Naive thymus-derived CD4-positive, alpha-beta T cell (primary cell): ENCODE measurements at regions of chr12 and their contacts with region 1.

Region 1: GRCh38 chr12:44847888-44848702 is 28.0 kb downstream of the NELL2 start:
- DNase-seq: peak; percentile 29 to 86 (median 79)
- ATAC-seq: peak; percentile 93
- H3K4me3 ChIP-seq: peak overlapping the region; percentile 30
- H3K4me3 Mint-ChIP-seq: peak overlapping the region; percentile 65 to 84 (median 78)
- H3K27ac ChIP-seq: peak overlapping the region; percentile 62
- H3K27ac Mint-ChIP-seq: peak overlapping the region; percentile 90 to 99 (median 97)
- H3K4me1 ChIP-seq: peaks cover 67 to 77% of the 10 kb centered on the region in 2 donors
- H3K4me1 Mint-ChIP-seq: peaks cover 27 to 95% (median 84%) of the 10 kb centered on the region in 7 donors
- H3K27me3 ChIP-seq: no peaks in the 10 kb centered on the region
- H3K27me3 Mint-ChIP-seq: no peaks in the 10 kb centered on the region

Region 2: GRCh38 chr12:44817687-44818086 is 30.4 kb before region 1 on chr12:
- CTCF ChIA-PET with region 1: interaction called, 3 read pairs
- POLR2A ChIA-PET with region 1: interaction called, 10 read pairs
- intact Hi-C with region 1: loop called (anchors 1 to 2 kb)
- DNase-seq: no peak
- ATAC-seq: no peak
- H3K4me3 ChIP-seq: no peak overlapping the region
- H3K4me3 Mint-ChIP-seq: peak overlapping the region in 3 of 10 donors; percentile 9 to 39 (median 28)
- H3K27ac ChIP-seq: no peak overlapping the region
- H3K27ac Mint-ChIP-seq: peak overlapping the region in 8 of 9 donors; percentile 5 to 91 (median 37)
- H3K4me1 ChIP-seq: peaks cover 17 to 24% of the 10 kb centered on the region in 2 donors
- H3K4me1 Mint-ChIP-seq: peaks cover 13 to 84% (median 64%) of the 10 kb centered on the region in 7 donors
- H3K27me3 ChIP-seq: no peaks in the 10 kb centered on the region
- H3K27me3 Mint-ChIP-seq: no peaks in the 10 kb centered on the region

Region 3: DNA sequence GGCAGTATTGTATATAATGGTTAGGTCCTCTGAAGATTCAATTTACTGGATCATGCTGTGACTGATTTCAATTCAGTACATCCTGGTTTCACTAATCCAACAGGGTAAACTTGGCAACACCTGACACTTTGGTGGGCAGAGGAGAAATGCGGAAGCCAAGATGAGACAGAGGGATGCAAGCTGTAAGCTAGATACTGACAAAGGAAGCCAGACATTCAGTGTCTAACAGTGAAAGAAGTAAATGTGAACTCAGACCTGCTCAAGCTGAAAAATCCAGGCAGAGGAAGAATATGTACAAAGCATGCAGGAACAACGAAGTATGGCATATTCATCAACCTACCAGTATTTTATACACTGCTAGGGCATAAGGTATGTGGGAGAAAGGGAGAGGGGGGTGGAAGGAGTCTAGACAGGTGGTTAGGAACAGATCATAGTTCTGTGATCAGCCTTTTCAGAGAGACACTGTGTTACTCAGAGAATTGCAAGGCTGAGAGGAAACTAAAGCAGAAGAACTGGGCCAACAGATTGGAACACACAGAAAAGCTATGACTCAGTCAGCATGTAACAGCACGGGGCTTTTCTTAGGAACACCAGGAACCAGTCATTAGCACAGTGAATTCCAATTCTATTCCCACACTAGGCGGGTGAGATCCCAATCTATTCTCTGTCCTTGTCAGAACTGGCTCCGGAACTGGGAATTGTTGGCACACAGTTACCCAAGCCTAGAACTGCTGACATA is 12.3 kb before region 1 on chr12:
- CTCF ChIA-PET with region 1: interaction called, 3 read pairs
- POLR2A ChIA-PET with region 1: interaction called, 60 read pairs
- intact Hi-C with region 1: loop called (anchors 1 kb)
- DNase-seq: peak in 6 of 9 donors; percentile 28 to 63 (median 36)
- ATAC-seq: peak; percentile 71
- H3K4me3 ChIP-seq: peak overlapping the region; percentile 7
- H3K4me3 Mint-ChIP-seq: peak overlapping the region; percentile 38 to 84 (median 72)
- H3K27ac ChIP-seq: peak overlapping the region; percentile 67
- H3K27ac Mint-ChIP-seq: peak overlapping the region; percentile 80 to 99 (median 95)
- H3K4me1 ChIP-seq: peaks cover 51 to 53% of the 10 kb centered on the region in 2 donors
- H3K4me1 Mint-ChIP-seq: peaks cover 26 to 98% (median 79%) of the 10 kb centered on the region in 7 donors
- H3K27me3 ChIP-seq: no peaks in the 10 kb centered on the region
- H3K27me3 Mint-ChIP-seq: no peaks in the 10 kb centered on the region

Region 4: GRCh38 chr12:44863867-44864266 is 15.8 kb after region 1 on chr12:
- CTCF ChIA-PET with region 1: no interaction called
- POLR2A ChIA-PET with region 1: interaction called, 21 read pairs
- intact Hi-C with region 1: loop called (anchors 1 kb)
- DNase-seq: peak in 6 of 9 donors; percentile 40 to 79 (median 68)
- ATAC-seq: peak; percentile 89
- H3K4me3 ChIP-seq: no peak overlapping the region
- H3K4me3 Mint-ChIP-seq: peak overlapping the region in 9 of 10 donors; percentile 2 to 62 (median 50)
- H3K27ac ChIP-seq: no peak overlapping the region
- H3K27ac Mint-ChIP-seq: peak overlapping the region; percentile 3 to 98 (median 76)
- H3K4me1 ChIP-seq: peaks cover 7 to 34% of the 10 kb centered on the region in 2 donors
- H3K4me1 Mint-ChIP-seq: peaks cover 7 to 78% (median 35%) of the 10 kb centered on the region in 7 donors
- H3K27me3 ChIP-seq: no peaks in the 10 kb centered on the region
- H3K27me3 Mint-ChIP-seq: no peaks in the 10 kb centered on the region